MCF 10A (cell line): ENCODE measurements at regions of chr12 and their contacts with region 1.

Region 1: GRCh38 chr12:109858764-109859163 is 21.6 kb downstream of the GLTP start:
- DNase-seq: no peak
- H3K4me3 Mint-ChIP-seq: no peak overlapping the region
- H3K27ac Mint-ChIP-seq: no peak overlapping the region
- H3K4me1 Mint-ChIP-seq: no peaks in the 10 kb centered on the region
- H3K27me3 Mint-ChIP-seq: no peaks in the 10 kb centered on the region
- CTCF ChIP-seq: no peak

Region 2: DNA sequence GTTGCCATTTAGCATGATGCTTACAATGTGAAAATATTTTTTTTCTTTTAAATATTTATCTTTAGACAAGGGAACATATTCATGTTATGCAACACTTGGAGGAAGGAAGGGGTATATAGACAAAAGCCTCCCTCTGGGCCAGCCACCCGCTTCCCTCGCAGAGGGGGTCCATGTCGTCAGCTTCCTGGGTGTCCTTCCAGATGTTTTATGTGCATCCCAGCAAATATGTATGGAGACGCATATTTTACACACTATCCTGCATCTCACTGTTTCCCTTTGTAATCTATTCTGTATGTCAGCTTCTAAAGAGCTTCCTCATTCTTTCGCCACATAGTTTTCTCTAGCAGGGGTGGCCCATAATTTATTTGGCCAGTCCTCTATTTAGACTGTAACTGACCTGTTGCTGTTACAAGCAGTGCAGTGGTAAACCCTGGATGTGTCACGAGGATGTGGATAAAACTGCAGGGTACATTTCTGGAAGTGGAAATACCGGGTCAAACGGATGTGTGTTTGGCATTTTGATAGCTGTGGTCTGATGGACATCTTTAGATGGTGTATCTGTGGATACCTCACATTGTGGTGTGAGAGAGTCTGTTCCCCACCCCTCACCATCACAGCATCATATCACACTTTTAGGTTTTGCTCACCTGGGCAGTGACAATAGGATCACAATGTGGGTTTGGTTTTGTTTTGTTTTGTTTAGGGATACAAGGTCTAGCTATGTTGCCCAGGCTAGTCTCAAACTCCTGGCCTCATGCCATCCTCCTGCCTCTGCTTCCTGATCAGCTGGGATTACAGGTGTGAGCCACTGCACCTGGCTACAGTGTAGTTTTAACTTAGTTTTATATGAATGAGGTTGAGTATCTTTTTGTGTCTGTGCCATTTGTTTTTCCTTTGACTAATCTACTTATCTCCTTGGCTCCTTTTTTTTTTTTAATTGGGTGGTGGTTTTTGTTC is 113.5 kb before region 1 on chr12:
- CTCF ChIA-PET with region 1: no interaction called
- POLR2A ChIA-PET with region 1: no interaction called
- intact Hi-C with region 1: no loop called
- DNase-seq: no peak
- H3K4me3 Mint-ChIP-seq: no peak overlapping the region
- H3K27ac Mint-ChIP-seq: no peak overlapping the region
- H3K4me1 Mint-ChIP-seq: no peaks in the 10 kb centered on the region
- H3K27me3 Mint-ChIP-seq: no peaks in the 10 kb centered on the region
- CTCF ChIP-seq: no peak

Region 3: DNA sequence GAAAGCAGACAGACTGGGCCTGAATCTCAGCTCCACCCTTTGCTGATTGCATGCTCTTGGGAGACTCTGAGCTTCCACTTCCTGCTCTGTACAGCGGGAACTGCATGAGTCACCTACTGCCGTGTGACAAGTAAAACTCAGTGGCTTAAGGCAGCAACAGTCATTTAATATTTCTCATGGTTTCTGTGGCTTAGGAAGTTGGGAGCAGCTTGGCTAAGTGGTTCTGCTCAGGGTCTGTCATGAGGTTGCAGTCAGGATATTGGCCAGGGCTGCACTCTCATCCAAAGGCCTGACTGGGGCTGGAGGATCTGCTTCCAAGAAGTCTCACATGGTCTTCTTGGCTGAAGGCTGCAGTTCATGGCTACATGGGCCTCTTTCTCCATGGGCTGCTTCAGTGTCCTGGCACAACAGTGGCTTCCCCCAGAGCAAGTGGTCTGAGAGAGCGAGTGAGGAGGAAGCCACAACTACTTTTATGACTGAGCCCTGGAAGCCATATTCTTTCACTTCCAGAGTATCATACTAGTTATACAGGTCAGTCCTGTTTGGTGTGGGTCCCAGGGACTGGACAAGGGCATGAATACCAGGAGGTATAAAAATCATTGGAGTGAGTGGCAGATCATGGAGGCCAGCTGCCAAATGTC is 95.4 kb before region 1 on chr12:
- CTCF ChIA-PET with region 1: no interaction called
- POLR2A ChIA-PET with region 1: no interaction called
- intact Hi-C with region 1: no loop called
- DNase-seq: peak; percentile 36
- H3K4me3 Mint-ChIP-seq: no peak overlapping the region
- H3K27ac Mint-ChIP-seq: no peak overlapping the region
- H3K4me1 Mint-ChIP-seq: no peaks in the 10 kb centered on the region
- H3K27me3 Mint-ChIP-seq: no peaks in the 10 kb centered on the region
- CTCF ChIP-seq: no peak

Region 4: DNA sequence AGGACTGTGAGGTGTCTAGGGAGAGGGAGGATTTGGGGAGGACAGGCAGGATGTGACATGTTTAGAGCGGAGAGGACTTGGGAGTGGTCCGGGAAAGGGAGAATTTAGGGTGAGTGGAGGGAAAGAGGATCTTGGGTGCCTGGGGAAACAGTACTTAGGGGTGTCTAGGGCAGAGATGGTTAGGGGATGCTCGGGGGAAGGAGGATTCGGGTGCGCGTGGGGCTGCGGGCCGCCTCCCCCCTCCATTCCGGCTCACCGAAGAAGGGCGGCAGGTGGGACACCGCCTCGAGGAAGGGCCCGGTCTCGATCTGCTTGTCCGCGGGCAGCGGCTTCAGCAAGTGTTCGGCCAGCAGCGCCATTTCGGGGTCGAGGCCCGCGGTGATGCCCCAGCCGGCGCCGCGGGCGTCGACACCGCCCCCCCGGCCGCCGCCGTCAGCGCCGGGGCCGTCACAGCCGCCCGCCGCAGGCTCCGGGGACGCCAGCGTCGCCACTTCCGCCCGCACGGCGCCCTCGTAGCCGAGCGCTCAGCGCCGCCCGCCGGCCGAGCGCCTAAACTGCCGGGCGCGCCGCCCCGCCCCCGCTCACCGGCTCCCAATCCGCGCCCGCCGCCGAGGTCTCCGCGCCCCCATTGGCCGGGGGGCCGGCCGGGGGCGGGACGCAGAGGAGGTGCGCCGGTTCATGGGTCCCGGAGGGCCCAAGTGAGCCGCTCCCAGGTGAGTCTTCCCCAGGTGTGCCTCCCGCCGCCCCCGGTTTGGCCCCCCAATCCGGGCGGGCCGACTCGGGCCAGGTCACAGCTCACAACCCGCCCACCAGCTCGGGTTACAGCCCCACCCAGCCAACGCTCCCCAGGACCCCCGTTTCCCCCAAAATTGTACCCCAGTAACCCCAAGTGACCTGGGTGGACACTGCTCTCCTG is 21.5 kb after region 1 on chr12 and contains the start of gene GLTP:
- CTCF ChIA-PET with region 1: interaction called, 23 read pairs
- POLR2A ChIA-PET with region 1: no interaction called
- intact Hi-C with region 1: loop called (anchors 1 kb)
- DNase-seq: peak; percentile 88
- H3K4me3 Mint-ChIP-seq: peak within 1 kb of the TSS; percentile 96
- H3K27ac Mint-ChIP-seq: peak within 1 kb of the TSS; percentile 82
- H3K4me1 Mint-ChIP-seq: peaks cover 41% of the 10 kb centered on the region
- H3K27me3 Mint-ChIP-seq: no peaks in the 10 kb centered on the region
- CTCF ChIP-seq: peak; percentile 56
- total RNA-seq, gene GLTP: 37.2 and 53.3 TPM in 2 replicates

Region 5: DNA sequence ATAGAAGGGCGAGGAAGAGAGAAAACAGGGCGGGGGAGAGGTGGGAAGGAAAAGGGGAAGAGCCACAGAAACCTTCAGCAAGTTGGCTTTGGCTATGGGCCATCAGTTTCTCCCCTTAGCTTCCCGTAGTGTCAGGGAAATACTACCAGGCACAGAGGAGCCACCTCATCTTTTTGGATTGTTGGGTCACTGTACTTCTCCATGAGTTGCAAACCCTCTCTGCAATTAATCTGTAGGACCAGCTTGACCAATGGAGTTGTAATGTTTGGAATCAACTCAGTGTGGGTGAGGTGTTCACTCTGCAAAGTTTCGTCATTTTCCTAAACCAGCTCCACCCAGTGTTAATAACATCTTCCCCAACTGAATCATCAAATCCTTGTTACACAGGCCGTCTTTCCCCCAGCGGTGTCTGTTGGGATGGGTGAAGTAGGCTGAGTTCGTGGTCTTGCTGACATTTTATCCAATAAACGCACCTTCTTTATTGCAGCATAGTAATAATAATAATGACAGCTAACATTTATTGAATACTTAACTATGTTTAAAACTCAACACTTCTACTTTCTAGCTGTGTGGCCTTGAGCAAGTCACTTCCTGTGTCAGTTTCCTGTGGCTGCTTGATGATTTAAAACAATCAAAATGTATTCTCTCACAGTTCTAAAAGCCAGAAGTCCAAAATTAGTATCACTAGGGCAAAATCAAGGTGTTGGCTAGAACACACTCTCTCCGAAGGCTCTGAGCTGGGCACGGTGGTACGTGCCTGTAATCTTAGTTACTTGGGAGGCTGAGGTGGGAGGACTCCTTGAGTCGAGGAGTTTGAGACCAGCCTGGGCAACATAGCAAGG is 29.6 kb after region 1 on chr12:
- CTCF ChIA-PET with region 1: interaction called, 10 read pairs
- POLR2A ChIA-PET with region 1: no interaction called
- intact Hi-C with region 1: no loop called
- DNase-seq: peak; percentile 94
- H3K4me3 Mint-ChIP-seq: peak overlapping the region; percentile 23
- H3K27ac Mint-ChIP-seq: peak overlapping the region; percentile 97
- H3K4me1 Mint-ChIP-seq: peaks cover 35% of the 10 kb centered on the region
- H3K27me3 Mint-ChIP-seq: no peaks in the 10 kb centered on the region
- CTCF ChIP-seq: peak; percentile 7

Region 6: DNA sequence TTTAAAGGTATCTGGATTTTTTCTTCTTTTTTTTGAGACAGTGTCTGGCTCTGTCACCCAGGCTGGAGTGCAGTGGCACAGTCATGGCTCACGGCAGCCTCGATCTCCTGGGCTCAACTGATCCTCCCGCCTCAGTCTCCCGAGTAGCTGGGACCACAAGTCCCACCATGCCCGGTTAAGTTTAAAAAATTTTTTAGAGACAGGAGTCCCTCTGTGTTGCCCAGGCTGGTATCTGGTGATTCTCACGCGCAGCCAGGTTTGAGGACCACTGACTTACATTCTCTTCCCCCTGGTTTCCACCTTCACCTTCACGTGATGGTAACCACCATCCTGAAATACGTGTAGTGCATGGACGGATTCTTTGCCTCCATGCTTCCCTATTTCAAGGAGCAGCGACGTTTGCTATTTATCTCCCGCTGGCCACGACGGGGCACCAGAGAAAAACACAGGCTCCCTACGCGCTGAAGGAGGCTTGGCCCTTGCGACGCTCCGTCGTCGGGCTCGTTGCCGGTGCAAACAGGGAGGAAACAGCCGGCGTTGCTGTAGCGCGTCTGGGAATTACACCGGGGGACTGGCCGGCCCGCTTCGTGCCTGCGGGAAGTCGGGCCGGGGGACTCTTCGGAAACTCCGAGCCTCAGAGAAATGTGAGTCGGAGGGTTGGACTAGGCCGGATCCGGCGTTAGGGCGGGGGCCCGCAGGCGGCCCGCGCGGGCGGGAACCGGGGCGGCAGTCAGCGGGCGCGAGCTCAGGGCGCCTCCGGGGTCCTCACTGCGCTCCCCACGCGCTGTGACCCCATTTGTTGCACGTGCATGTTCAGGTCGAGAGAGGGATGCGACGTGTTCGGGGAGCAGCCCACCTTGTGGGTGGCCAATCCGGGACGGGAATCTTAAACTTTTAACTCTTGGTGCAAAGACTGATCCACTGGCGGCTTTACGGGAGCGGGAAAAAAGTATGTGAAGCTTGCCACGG is 41.3 kb after region 1 on chr12 and contains the start of gene TCHP:
- CTCF ChIA-PET with region 1: interaction called, 21 read pairs
- POLR2A ChIA-PET with region 1: interaction called, 3 read pairs
- intact Hi-C with region 1: loop called (anchors 1 kb)
- DNase-seq: peak; percentile 86
- H3K4me3 Mint-ChIP-seq: peak within 1 kb of the TSS; percentile 98
- H3K27ac Mint-ChIP-seq: peak within 1 kb of the TSS; percentile 97
- H3K4me1 Mint-ChIP-seq: peaks cover 20% of the 10 kb centered on the region
- H3K27me3 Mint-ChIP-seq: no peaks in the 10 kb centered on the region
- CTCF ChIP-seq: peak; percentile 26
- total RNA-seq, gene TCHP: 26.4 and 36.3 TPM in 2 replicates

Region 7: DNA sequence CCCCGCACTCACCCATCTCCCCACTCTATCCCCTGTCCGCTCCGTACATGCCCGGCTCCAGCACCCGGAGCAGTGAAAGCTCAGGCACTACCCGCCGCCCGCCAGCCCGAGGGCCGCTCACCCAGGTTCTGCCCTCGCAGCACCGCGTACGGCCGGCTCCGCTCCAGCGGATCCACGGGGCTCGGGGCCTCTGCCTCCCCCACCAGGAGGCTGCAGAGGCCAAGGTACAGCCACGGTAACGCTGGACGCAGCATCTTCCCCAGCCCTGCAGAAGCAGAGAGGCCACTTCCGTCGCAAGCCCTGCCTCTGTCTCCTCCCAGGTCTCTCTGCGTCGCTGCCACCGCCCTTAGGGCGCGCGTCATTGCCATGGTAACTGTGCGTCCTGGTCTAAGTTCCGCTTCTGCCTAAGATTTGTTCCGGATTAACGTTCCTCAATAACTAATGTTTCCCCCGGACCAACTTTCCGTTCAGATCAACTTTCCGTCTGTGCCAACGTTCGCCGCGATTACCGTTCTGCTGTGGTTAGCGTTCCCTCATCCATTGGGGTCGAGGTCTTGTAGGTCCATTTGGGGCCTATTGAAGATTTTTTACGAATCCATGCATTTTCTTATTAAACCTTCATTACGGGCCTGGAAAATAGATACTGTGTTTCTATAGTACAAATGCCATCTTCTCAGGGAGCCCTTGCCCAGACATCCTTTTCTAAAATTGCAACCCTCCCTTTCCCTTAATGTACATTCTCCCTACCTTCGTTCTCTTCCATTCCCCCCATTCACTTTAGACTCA is 189.7 kb after region 1 on chr12 and contains the start of gene C12orf76:
- CTCF ChIA-PET with region 1: no interaction called
- POLR2A ChIA-PET with region 1: no interaction called
- intact Hi-C with region 1: no loop called
- DNase-seq: peak; percentile 97
- H3K4me3 Mint-ChIP-seq: peak within 1 kb of the TSS; percentile 98
- H3K27ac Mint-ChIP-seq: peak within 1 kb of the TSS; percentile 97
- H3K4me1 Mint-ChIP-seq: peaks cover 20% of the 10 kb centered on the region
- H3K27me3 Mint-ChIP-seq: no peaks in the 10 kb centered on the region
- CTCF ChIP-seq: no peak
- total RNA-seq, gene C12orf76: 7.3 and 13.4 TPM in 2 replicates

Region 8: GRCh38 chr12:110199339-110200123 is 340.8 kb after region 1 on chr12:
- CTCF ChIA-PET with region 1: no interaction called
- POLR2A ChIA-PET with region 1: no interaction called
- intact Hi-C with region 1: no loop called
- DNase-seq: peak; percentile 13
- H3K4me3 Mint-ChIP-seq: no peak overlapping the region
- H3K27ac Mint-ChIP-seq: no peak overlapping the region
- H3K4me1 Mint-ChIP-seq: peaks cover 8% of the 10 kb centered on the region
- H3K27me3 Mint-ChIP-seq: no peaks in the 10 kb centered on the region
- CTCF ChIP-seq: no peak